ENCODE measurements at regions of chr20 and their contacts with region 1.

Region 1: GRCh38 chr20:33810885-33811777 is at the start of gene CHMP4B:
- DNase-seq: peak; percentile 97 to 99 (median 98)
- H3K4me3 ChIP-seq: peak within 1 kb of the TSS; percentile 82
- H3K4me3 Mint-ChIP-seq: peak within 1 kb of the TSS; percentile 92 to 100 (median 94)
- H3K27ac ChIP-seq: peak within 1 kb of the TSS; percentile 85
- H3K27ac Mint-ChIP-seq: peak within 1 kb of the TSS; percentile 37 to 100 (median 94)
- H3K4me1 ChIP-seq: peaks cover 36% of the 10 kb centered on the region
- H3K4me1 Mint-ChIP-seq: peaks cover 40 to 53% (median 46%) of the 10 kb centered on the region in 3 donors
- H3K27me3 ChIP-seq: no peaks in the 10 kb centered on the region
- H3K27me3 Mint-ChIP-seq: peaks cover 0 to 2% of the 10 kb centered on the region in 2 donors
- total RNA-seq, gene CHMP4B: 78.3 to 79.9 TPM

Region 2: DNA sequence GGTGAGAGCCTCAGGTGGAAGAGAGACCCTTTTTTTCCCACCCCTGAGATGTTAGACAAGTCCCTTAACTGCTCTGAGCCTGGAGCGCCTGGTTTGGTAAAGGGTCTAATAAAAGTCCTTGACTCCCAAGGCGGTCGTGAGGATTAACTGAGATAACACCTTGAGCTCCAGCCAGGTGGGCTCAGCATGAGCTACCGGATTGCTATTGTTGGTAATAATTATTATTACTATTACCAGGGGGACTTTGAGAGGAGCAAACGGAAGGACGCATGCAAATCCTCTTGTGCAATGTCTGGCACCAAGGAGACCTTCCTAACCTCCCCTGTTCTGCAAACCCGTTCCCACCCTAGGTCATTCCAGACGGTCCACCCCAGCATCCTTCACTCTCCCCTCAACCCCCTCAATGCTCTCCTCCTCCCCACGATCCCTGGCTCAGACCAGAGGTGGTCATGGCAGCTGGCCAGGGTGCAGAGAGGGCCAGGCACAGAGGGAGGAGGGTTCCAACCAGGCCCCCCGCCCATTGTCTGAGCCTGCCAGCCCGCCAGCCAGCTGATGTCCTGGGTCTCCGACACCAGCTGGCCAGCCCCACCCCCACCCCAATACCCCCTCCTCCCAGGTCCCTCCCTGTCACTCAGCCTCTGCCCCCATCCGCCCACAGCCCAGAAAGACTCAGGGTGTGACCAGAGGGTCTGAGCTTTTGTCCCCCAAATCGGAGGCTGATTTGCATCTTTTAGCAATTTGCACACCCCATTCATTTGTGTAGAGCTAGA is 335.6 kb before region 1 on chr20:
- CTCF ChIA-PET with region 1: no interaction called
- POLR2A ChIA-PET with region 1: no interaction called
- DNase-seq: no peak
- H3K4me3 ChIP-seq: no peak overlapping the region
- H3K4me3 Mint-ChIP-seq: no peak overlapping the region
- H3K27ac ChIP-seq: no peak overlapping the region
- H3K27ac Mint-ChIP-seq: no peak overlapping the region
- H3K4me1 ChIP-seq: no peaks in the 10 kb centered on the region
- H3K4me1 Mint-ChIP-seq: no peaks in the 10 kb centered on the region
- H3K27me3 ChIP-seq: no peaks in the 10 kb centered on the region
- H3K27me3 Mint-ChIP-seq: peaks cover 0 to 3% of the 10 kb centered on the region in 2 donors

Region 3: GRCh38 chr20:33606118-33606771 is 204.9 kb before region 1 on chr20:
- CTCF ChIA-PET with region 1: no interaction called
- POLR2A ChIA-PET with region 1: no interaction called
- DNase-seq: no peak
- H3K4me3 ChIP-seq: no peak overlapping the region
- H3K4me3 Mint-ChIP-seq: no peak overlapping the region
- H3K27ac ChIP-seq: no peak overlapping the region
- H3K27ac Mint-ChIP-seq: no peak overlapping the region
- H3K4me1 ChIP-seq: no peaks in the 10 kb centered on the region
- H3K4me1 Mint-ChIP-seq: peaks cover 17 to 26% (median 18%) of the 10 kb centered on the region in 3 donors
- H3K27me3 ChIP-seq: no peaks in the 10 kb centered on the region
- H3K27me3 Mint-ChIP-seq: no peaks in the 10 kb centered on the region

Region 4: GRCh38 chr20:33791959-33792597 is 19.1 kb before region 1 on chr20:
- CTCF ChIA-PET with region 1: interaction called, 10 read pairs
- POLR2A ChIA-PET with region 1: no interaction called
- DNase-seq: peak; percentile 20 to 67 (median 33)
- H3K4me3 ChIP-seq: no peak overlapping the region
- H3K4me3 Mint-ChIP-seq: no peak overlapping the region
- H3K27ac ChIP-seq: no peak overlapping the region
- H3K27ac Mint-ChIP-seq: peak overlapping the region in 1 of 8 donors; percentile 17
- H3K4me1 ChIP-seq: peaks cover 6% of the 10 kb centered on the region
- H3K4me1 Mint-ChIP-seq: peaks cover 8 to 27% (median 18%) of the 10 kb centered on the region in 3 donors
- H3K27me3 ChIP-seq: no peaks in the 10 kb centered on the region
- H3K27me3 Mint-ChIP-seq: no peaks in the 10 kb centered on the region

Region 5: GRCh38 chr20:33859157-33859695 is 48.1 kb after region 1 on chr20:
- CTCF ChIA-PET with region 1: interaction called, 4 read pairs
- POLR2A ChIA-PET with region 1: interaction called, 10 read pairs
- DNase-seq: peak in 3 of 5 donors; percentile 20 to 58 (median 21)
- H3K4me3 ChIP-seq: peak overlapping the region; percentile 34
- H3K4me3 Mint-ChIP-seq: peak overlapping the region in 5 of 7 donors; percentile 40 to 73 (median 67)
- H3K27ac ChIP-seq: no peak overlapping the region
- H3K27ac Mint-ChIP-seq: peak overlapping the region; percentile 15 to 94 (median 88)
- H3K4me1 ChIP-seq: peaks cover 29% of the 10 kb centered on the region
- H3K4me1 Mint-ChIP-seq: peaks cover 23 to 35% (median 28%) of the 10 kb centered on the region in 3 donors
- H3K27me3 ChIP-seq: no peaks in the 10 kb centered on the region
- H3K27me3 Mint-ChIP-seq: peaks cover 0 to 5% of the 10 kb centered on the region in 2 donors